Calu3 (cell line): ENCODE measurements at regions of chr6 and their contacts with region 1.

Region 1: GRCh38 chr6:7140631-7141378 is 33.0 kb downstream of the RREB1 start:
- DNase-seq: peak; percentile 80
- H3K4me3 Mint-ChIP-seq: peak overlapping the region; percentile 64
- H3K27ac Mint-ChIP-seq: peak overlapping the region; percentile 71
- H3K4me1 Mint-ChIP-seq: peaks cover 33% of the 10 kb centered on the region
- H3K27me3 Mint-ChIP-seq: no peaks in the 10 kb centered on the region
- CTCF ChIP-seq: no peak

Region 2: DNA sequence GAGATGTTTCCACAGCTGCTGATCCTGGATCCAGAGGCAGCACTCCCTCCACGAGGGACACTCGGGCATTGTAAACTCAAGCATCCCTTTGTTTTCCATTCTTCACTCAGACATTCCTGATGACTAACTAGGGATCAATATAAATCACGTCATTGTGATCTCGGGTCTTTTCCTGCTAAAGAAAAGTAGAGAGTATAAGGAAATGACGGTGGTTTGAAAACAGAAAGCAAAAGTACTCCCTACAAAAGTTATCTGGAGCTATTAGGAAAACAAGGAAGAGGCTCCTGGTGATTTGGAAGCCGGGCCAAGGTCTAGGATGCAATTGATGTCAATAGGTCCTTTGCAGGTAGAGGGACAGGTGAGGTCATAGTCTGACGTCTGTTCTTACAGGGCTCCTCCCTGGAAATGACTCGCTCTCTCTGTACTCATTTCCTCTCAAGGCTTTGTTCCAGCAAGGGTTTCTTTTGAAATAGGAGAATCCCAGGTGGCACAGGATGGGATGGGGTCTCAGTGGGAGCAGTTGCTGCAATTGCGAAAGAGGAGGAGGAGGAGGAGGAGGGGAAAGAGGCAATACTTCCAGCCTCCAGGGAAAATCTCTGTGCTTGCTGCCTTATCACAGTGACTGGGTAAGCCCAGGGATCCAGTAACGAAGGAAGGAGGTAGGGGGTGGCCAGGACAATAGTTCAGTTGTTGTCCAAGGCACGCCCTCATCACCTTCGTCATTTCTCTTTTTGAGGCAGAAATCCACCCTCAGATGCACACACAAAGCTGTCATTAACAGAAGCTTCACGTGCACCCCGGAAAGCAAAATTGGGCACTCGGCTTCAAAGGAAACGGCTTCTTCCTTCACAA is 329.4 kb before region 1 on chr6:
- CTCF ChIA-PET with region 1: no interaction called
- intact Hi-C with region 1: loop called (anchors 10 kb)
- DNase-seq: peak; percentile 78
- H3K4me3 Mint-ChIP-seq: peak overlapping the region; percentile 63
- H3K27ac Mint-ChIP-seq: peak overlapping the region; percentile 99
- H3K4me1 Mint-ChIP-seq: peaks cover 34% of the 10 kb centered on the region
- H3K27me3 Mint-ChIP-seq: no peaks in the 10 kb centered on the region
- CTCF ChIP-seq: no peak

Region 3: DNA sequence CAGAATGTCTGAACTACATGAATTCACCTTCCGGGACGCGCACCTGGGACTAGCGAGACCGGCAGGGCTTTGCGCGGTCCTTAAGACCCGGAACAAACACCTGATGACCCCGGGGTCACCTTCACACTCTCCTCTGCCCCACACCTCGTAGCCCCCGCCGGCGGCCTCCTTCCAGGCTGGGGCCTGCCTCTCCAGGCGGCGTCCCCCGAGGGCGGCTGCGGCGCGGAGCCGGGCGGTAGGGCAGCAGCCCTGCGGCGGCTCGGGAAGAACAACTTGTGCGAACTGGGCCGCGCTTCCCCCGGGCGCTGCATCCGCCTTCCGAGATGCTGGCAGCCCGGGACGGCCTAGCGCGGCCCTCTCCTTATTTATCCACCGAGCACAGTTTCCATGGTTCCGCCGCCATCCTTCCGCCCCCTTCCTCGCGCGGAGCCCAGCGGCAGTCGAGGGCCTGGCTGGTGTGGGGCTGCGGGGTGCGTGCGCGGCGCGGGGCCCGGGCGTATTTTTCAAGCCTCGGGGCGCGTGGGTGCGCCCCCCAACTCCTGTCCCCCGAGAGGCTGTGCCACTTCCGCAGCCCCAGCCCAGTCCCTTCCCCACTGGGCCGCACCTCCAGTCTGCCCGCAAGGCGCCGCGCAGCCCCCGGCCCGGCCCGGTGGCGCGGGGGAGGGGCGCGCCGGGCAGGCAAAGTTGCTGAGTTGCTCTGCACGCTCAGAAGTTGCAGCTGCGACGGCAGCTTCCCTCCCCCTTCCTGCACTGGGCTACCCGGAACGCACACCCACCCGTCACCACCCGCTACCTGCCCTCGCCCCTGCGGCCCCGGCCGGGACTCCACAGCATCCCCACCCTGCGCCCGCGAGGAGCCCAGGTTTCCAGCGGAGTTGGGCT is 89.3 kb before region 1 on chr6:
- CTCF ChIA-PET with region 1: no interaction called
- intact Hi-C with region 1: loop called (anchors 5 kb)
- DNase-seq: peak; percentile 45
- H3K4me3 Mint-ChIP-seq: peak overlapping the region; percentile 60
- H3K27ac Mint-ChIP-seq: peak overlapping the region; percentile 80
- H3K4me1 Mint-ChIP-seq: peaks cover 11% of the 10 kb centered on the region
- H3K27me3 Mint-ChIP-seq: no peaks in the 10 kb centered on the region
- CTCF ChIP-seq: no peak

Region 4: GRCh38 chr6:7112741-7113313 is 28.0 kb before region 1 on chr6:
- CTCF ChIA-PET with region 1: interaction called, 3 read pairs
- intact Hi-C with region 1: loop called (anchors 2 kb)
- DNase-seq: peak; percentile 43
- H3K4me3 Mint-ChIP-seq: peak overlapping the region; percentile 77
- H3K27ac Mint-ChIP-seq: peak overlapping the region; percentile 77
- H3K4me1 Mint-ChIP-seq: peaks cover 28% of the 10 kb centered on the region
- H3K27me3 Mint-ChIP-seq: no peaks in the 10 kb centered on the region
- CTCF ChIP-seq: no peak

Region 5: DNA sequence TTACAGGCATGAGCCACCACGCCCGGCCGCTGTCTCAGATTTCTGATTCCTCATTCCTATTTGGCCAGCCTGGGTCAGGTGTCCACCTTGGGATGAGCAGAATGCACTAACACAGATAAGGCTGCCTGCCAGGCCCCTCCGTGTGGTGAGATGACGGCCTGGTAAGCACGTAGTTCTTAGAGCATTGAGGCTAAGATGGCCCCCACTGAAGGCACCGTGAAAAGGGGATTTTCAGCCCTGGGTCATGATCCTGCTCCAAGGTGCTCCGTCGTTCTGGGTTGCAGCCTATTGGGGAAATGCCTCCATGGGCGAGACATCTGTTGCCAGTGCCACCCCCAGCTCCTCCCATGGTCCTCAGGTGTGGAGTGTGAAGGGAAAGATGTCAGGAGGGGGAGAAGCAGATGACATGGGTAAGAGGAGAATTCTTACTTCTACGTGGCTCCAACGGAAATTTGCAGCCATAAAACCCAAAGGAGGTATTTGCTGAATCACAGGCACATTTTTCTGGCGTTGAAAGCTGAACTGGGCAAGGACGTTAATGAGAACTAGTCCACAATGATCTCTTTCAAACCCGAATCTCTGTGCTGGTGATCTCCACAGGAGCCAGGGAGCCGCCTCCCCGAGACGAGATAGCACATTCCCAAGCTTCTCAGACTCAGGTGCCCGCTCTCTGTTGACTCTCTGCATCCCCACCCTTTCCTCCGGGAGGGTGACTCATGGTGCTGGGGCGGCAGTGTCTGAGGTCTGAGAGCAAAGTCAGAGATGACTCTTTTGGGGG is 551.1 kb after region 1 on chr6:
- CTCF ChIA-PET with region 1: no interaction called
- intact Hi-C with region 1: no loop called
- DNase-seq: peak; percentile 29
- H3K4me3 Mint-ChIP-seq: peak overlapping the region; percentile 30
- H3K27ac Mint-ChIP-seq: peak overlapping the region; percentile 66
- H3K4me1 Mint-ChIP-seq: peaks cover 10% of the 10 kb centered on the region
- H3K27me3 Mint-ChIP-seq: no peaks in the 10 kb centered on the region
- CTCF ChIP-seq: no peak